Gastrocnemius medialis (tissue), 4 donors: ENCODE measurements at regions of chr4 and their contacts with region 1.

Region 1: DNA sequence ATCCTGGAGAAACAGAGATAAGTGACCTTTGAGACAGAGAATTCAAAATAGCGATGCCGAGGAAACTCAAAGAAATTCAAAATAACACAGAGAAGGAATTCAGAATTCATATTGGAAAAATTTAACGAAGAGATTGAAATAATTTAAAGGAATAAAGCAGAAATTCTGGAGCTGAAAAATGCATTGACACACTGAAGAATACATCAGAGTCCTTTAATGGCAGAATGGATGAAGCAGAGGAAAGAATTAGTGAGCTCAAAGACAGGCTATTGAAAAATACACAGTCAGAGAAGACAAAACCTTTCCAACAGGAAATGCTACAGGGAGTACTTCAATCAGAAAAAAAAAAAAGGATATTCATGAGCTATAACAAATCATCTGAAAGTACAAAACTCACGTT is 185.8 kb downstream of the PARM1 start:
- DNase-seq: no peak
- ATAC-seq: no peak
- H3K4me3 ChIP-seq: no peak overlapping the region
- H3K27ac ChIP-seq: no peak overlapping the region
- H3K4me1 ChIP-seq: no peaks in the 10 kb centered on the region
- H3K27me3 ChIP-seq: no peaks in the 10 kb centered on the region
- CTCF ChIP-seq: no peak
- POLR2A ChIP-seq: no peak

Region 2: DNA sequence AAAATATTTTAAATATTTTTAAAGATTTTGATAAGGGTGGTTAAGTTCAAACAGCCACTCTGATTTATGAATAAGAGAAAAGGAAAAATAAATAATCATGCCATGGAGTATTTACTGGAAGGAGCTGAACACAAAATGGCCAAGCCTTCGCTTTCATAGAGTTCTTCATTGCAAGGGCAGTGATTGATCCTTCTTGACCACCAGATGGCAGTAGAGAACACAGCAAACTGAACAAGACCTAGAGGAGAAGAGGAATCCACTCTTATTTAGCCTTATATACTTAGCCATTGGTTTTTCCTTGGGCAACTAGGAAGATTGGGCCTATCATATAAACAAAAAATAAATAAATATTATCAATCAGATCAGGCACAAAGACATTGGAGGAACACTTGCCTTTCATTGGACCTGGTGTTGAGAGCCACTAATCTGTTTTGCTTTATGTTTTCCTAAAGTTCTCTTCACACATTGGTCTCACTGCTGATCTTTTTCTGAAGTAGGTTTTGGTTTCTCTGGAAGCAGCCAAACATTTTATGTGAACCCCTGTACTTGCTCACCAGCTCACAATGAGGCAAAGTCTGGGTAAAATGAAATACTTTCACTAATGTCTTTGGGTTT is 243.9 kb before region 1 on chr4:
- in situ Hi-C with region 1: no loop called
- intact Hi-C with region 1: loop called (anchors 5 kb)
- DNase-seq: peak in 1 of 2 donors; percentile 8
- ATAC-seq: peak; percentile 73 to 95
- H3K4me3 ChIP-seq: no peak overlapping the region
- H3K27ac ChIP-seq: no peak overlapping the region
- H3K4me1 ChIP-seq: no peaks in the 10 kb centered on the region
- H3K27me3 ChIP-seq: no peaks in the 10 kb centered on the region
- CTCF ChIP-seq: peak; percentile 59 to 92 (median 73)
- POLR2A ChIP-seq: no peak

Region 3: GRCh38 chr4:74926007-74926406 is 192.7 kb before region 1 on chr4:
- in situ Hi-C with region 1: loop called (anchors 5 to 25 kb)
- intact Hi-C with region 1: no loop called
- DNase-seq: no peak
- ATAC-seq: no peak
- H3K4me3 ChIP-seq: no peak overlapping the region
- H3K27ac ChIP-seq: no peak overlapping the region
- H3K4me1 ChIP-seq: no peaks in the 10 kb centered on the region
- H3K27me3 ChIP-seq: no peaks in the 10 kb centered on the region
- CTCF ChIP-seq: no peak
- POLR2A ChIP-seq: no peak

Region 4: DNA sequence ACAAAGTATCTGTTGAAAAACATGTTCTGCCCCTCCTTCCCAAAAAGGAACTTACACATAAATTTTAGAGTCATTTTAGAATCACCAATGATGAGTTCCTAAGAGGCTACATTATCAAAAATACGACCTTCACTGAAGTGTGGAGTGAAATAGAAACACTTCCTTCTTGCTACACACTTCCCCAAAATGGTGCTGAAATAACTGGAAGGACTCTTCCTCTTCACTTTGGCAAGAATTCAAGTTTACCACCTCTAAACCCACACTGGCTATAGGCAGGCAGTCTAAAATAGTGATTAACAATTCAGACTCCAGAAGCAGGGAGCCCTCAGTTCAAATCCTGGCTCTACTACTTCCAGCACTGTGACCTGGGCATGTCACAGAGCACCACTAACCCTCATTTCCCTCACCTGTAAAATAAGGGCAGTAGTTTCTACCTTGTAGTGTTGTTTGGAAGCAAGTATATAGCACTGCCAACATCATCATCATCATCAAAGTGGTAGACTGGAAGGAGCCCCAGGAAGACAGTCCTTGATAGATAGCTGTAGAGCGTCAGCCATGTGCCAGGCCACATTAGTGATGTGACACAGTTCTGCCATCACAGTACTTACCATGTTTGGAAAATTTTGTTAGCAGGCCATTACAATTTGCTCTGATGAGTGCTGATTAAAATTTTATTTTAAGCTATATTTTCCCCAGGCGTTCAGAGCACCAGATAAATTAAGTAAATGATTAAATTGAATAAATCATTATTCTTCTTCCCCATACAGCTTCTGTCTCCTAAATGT is 82.5 kb before region 1 on chr4:
- in situ Hi-C with region 1: no loop called
- intact Hi-C with region 1: no loop called
- DNase-seq: no peak
- ATAC-seq: no peak
- H3K4me3 ChIP-seq: no peak overlapping the region
- H3K27ac ChIP-seq: no peak overlapping the region
- H3K4me1 ChIP-seq: peaks cover 0 to 3% of the 10 kb centered on the region in 2 donors
- H3K27me3 ChIP-seq: no peaks in the 10 kb centered on the region
- CTCF ChIP-seq: no peak
- POLR2A ChIP-seq: no peak